T-cell (primary cell): ENCODE measurements at regions of chr20 and their contacts with region 1.

Region 1: DNA sequence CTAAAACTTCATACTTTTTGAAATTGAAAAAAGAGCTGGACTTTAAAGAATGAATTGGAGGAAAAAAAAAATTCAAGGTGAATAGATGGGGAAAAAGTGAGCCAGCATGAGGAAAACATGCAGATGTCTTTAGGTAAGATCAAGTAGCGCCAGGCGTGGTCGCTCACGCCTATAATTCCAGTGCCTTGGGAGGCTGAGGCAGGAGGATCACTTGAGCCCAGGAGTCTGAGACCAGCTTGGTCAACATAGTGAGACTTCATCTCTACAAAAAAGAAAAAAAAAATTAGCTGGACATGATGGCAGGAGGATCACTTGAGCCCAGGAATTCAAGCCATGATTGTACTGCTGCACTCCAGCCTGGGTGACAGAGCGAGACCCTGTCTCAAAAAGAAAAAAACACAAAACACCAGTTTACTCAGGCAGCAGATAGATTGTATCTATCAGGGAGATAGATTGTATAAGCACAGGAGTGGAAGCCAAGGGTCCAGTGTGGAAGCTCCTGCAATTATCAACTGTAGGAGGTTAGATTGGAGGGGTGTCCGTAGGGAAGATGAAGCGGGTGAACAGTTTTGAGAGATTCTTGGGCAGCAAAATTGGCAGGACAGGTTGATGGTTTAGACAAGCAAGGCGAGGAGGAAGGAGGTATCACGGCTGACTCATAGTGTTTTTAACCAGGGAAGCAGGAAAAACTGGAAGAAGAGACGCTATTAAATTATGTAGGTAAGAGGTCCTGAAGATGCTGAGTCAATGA is 97.6 kb upstream of the ZNF217 start:
- DNase-seq: no peak
- ATAC-seq: no peak
- H3K4me3 ChIP-seq: no peak overlapping the region
- H3K4me3 Mint-ChIP-seq: no peak overlapping the region
- H3K27ac ChIP-seq: no peak overlapping the region
- H3K27ac Mint-ChIP-seq: peak overlapping the region; percentile 33 to 86
- H3K4me1 ChIP-seq: peaks cover 0 to 29% of the 10 kb centered on the region in 2 experiments
- H3K4me1 Mint-ChIP-seq: peaks cover 29 to 33% (median 29%) of the 10 kb centered on the region in 3 donors
- H3K27me3 ChIP-seq: no peaks in the 10 kb centered on the region
- H3K27me3 Mint-ChIP-seq: no peaks in the 10 kb centered on the region

Region 2: DNA sequence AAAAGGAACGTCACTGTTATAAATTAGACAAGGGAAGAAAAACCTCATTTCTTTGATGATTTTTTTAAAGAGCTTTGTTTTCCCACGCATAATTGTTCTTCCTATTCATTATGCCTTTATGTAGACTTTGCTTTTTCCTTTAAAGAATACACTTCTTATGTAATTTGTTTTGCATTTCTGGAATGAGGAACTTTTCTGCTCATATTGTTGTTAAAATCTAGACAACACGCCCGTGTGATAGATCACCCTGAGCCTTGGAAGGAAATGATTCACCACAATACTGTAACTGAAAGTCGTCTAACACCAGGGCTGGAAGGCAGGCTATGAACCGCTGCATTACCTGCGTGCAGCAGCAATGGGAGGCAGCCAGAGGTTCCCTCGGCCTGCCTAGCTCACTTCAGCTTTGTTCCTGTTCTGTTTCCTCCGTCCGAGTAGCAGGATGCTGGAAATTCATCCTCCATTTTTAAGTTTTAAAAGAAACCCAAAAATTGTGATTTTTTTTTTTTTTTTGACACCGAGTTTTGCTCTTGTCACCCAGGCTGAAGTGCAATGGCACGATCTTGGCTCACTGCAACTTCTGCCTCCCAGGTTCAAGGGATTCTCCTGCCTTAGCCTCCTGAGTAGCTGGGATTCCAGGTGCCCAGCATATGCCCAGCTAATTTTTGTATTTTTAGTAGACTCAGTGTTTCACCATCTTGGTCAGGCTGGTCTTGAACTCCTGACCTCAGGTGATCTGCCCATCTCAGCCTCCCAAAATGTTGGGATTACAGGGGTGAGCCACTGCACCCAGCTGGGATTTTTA is 48.0 kb before region 1 on chr20:
- CTCF ChIA-PET with region 1: no interaction called
- POLR2A ChIA-PET with region 1: interaction called in 1 of 2 experiments, 12 read pairs
- DNase-seq: peak; percentile 35 to 84 (median 62)
- ATAC-seq: peak; percentile 97 to 99 (median 98)
- H3K4me3 ChIP-seq: peak overlapping the region; percentile 20 to 25
- H3K4me3 Mint-ChIP-seq: peak overlapping the region; percentile 72 to 83 (median 81)
- H3K27ac ChIP-seq: peak overlapping the region; percentile 85
- H3K27ac Mint-ChIP-seq: peak overlapping the region; percentile 97 to 99
- H3K4me1 ChIP-seq: peaks cover 13 to 38% of the 10 kb centered on the region in 2 experiments
- H3K4me1 Mint-ChIP-seq: peaks cover 49 to 60% (median 49%) of the 10 kb centered on the region in 3 donors
- H3K27me3 ChIP-seq: no peaks in the 10 kb centered on the region
- H3K27me3 Mint-ChIP-seq: no peaks in the 10 kb centered on the region

Region 3: DNA sequence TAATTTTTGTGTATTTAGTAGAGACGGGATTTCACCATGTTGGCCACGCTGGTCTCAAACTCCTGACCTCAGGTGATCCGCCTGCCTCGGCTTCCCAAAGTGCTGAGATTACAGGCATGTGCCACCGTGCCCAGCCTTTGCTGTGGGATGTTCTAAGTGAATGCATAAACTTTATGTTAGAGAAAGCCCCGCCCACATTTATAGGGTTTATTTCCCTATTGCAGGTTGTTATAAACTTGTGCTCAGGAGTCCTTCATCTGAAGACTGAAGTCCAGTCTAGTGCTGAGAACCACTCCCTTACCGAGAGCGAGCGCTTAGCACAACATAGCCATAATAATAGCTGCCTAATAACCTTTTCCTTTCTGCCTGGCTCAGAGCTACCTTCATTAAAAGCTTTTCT is 22.2 kb before region 1 on chr20:
- CTCF ChIA-PET with region 1: no interaction called
- POLR2A ChIA-PET with region 1: no interaction called
- DNase-seq: no peak
- ATAC-seq: no peak
- H3K4me3 ChIP-seq: no peak overlapping the region
- H3K4me3 Mint-ChIP-seq: no peak overlapping the region
- H3K27ac ChIP-seq: no peak overlapping the region
- H3K27ac Mint-ChIP-seq: peak overlapping the region in 1 of 2 donors; percentile 48
- H3K4me1 ChIP-seq: no peaks in the 10 kb centered on the region
- H3K4me1 Mint-ChIP-seq: peaks cover 0 to 4% (median 3%) of the 10 kb centered on the region in 3 donors
- H3K27me3 ChIP-seq: no peaks in the 10 kb centered on the region
- H3K27me3 Mint-ChIP-seq: no peaks in the 10 kb centered on the region